ENCODE measurements at regions of chr4 and their contacts with region 1.

Region 1: DNA sequence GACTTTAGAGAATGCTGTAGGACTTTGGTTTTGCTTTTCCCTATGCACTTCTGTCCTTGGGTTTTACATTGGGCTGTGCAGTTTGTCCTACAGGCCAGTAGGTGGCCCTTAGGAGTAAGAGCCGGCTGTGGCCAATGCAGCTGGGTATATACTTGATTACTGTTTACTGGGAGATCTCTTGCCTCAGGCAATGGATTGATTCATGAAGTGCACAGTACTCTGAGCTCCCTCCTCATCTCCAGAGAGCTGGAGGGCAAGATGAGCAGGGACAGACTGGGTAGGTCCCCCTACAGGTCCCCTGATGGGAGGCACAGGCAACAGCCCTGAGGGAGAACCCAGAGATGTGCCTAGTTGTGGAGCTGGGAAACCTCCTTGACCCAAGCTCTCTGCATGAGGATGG is 103.8 kb upstream of the QRFPR start:
- DNase-seq: peak; percentile 50
- H3K4me3 ChIP-seq: no peak overlapping the region
- H3K27ac ChIP-seq: no peak overlapping the region
- H3K4me1 ChIP-seq: peaks cover 13% of the 10 kb centered on the region
- H3K27me3 ChIP-seq: no peaks in the 10 kb centered on the region
- CTCF ChIP-seq: peak; percentile 74

Region 2: GRCh38 chr4:121736735-121737351 is 252.2 kb after region 1 on chr4:
- CTCF ChIA-PET with region 1: no interaction called
- dilution Hi-C with region 1: loop called (anchors 5 kb)
- in situ Hi-C with region 1: no loop called
- intact Hi-C with region 1: loop called (anchors 5 kb)
- DNase-seq: peak; percentile 47
- H3K4me3 ChIP-seq: no peak overlapping the region
- H3K27ac ChIP-seq: no peak overlapping the region
- H3K4me1 ChIP-seq: no peaks in the 10 kb centered on the region
- H3K27me3 ChIP-seq: no peaks in the 10 kb centered on the region
- CTCF ChIP-seq: peak; percentile 59 to 67

Measured in mammary epithelial cell (primary cell).